ENCODE measurements at regions of chr7 and their contacts with region 1.

Region 1: DNA sequence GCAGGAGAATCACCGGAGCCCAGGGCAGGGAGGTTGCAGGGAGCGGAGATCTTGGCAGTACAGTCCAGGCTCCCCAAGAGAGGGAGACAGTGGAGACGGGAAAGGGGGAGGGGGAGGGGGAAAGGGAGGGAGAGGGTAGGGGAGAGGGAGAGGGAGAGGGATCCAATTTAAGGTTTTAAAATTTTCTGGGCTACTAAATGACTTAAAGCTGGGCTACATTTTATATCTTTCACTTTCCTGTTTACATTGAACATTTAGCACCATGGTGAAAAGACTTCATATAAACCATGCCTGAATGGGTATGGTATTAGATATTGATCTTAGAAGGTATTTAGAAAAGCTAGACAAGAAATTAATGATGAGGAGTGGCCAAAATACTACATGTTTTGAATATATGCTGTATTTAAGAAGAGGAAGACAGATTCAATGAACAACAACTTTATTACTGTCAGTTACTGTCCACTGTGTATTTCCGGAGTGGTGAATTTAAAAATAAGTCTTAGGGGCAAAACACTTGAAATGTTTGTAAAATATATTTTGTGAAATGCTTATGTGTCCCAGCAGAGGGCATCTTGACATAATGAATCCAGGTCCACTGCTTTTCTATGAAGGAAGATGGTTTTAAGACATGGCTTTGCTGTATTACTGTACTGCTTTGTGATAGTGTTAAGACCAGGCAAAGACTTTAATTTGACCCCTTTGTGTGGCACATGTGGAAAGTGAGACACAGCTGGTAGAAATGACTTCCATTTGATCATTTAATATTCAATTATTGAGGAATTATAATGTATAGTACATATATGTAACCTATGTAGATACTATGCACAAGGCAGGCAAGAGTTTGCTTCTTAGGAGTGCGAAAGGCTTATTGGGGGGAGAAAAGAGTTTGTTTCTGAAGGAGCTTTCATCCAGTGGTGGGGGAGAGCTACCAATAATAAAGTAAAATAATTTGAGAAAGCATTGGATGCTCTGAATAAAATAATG is 52.8 kb downstream of the NRF1 start:
- DNase-seq: no peak
- ATAC-seq: peak; percentile 25

Region 2: DNA sequence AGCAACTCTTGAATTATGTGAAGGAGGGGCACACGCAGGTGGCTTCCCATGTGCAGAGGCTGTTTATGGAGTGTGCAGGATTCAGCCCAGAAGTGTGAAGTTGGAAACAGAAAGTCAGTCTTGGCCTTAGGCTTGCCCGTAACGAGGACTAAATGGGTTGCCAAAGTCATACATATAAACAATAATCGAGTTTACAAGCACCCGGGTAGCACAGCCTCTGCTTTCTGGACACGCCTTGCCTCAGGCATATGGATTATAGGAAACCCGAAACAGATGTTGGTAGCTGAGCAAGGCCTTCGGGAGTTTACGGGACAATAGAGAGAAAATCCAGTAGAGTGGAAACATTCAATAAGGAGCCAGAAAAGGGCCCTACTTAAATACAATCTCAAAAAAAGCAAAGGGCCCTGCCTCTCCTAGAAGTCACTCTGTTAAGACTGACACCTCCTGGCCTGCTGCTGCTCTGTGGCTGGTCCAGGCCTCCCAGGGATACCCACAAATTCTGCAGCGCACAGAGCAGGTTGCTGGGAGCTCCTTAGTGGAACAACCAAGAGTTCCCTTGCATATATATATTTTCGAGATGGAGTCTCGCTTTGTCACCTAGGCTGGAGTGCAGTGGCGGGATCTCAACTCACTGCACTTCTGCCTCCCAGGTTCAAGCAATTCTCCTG is 113.5 kb before region 1 on chr7:
- intact Hi-C with region 1: no loop called
- DNase-seq: no peak
- ATAC-seq: no peak

Region 3: GRCh38 chr7:129824291-129825004 is 160.1 kb after region 1 on chr7:
- intact Hi-C with region 1: loop called (anchors 5 kb)
- DNase-seq: no peak
- ATAC-seq: no peak